SK-N-SH (cell line): ENCODE measurements at regions of chr18 and their contacts with region 1.

Region 1: DNA sequence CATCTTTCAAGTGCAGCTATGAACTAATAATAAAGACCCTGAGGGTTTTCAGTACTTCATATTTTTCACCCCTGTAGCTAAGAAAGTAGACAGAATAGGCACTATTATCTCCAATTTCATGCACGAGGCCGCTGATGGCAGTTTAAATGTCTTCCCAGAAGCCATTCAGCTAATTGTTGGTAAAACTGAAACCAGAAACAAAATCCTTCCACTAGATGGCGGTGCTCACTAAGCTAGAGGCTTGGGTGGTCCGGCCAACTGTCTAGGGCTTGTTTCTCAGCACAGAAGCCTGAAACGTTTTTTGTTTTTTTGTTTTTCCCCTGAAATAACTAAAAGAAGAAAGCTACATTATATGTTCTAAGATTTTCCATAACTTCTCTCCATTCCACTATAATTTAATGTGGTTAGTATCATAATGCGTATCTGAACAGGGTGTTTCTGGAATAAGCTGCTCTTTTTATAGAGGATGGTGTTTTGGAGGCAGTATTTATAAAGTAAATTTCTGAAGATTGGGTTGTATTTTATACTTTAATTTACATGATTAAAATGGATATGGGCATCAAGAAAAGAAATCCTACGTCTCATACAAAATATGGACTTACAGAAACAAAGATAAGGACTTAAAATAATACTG is 159.4 kb downstream of the PIK3C3 start:
- DNase-seq: peak; percentile 52
- H3K4me3 ChIP-seq: peak overlapping the region in 1 of 2 experiments; percentile 49; a peak in 1 of 4 replicates
- H3K27ac ChIP-seq: peak overlapping the region; percentile 32 to 34; a peak in 3 of 4 replicates
- H3K4me1 ChIP-seq: peaks cover 0 to 8% of the 10 kb centered on the region in 2 experiments; a peak in 2 of 4 replicates
- H3K27me3 ChIP-seq: no peaks in the 10 kb centered on the region
- CTCF ChIP-seq: peak; percentile 95
- EP300 ChIP-seq: no peak
- RAD21 ChIP-seq: peak; percentile 99

Region 2: DNA sequence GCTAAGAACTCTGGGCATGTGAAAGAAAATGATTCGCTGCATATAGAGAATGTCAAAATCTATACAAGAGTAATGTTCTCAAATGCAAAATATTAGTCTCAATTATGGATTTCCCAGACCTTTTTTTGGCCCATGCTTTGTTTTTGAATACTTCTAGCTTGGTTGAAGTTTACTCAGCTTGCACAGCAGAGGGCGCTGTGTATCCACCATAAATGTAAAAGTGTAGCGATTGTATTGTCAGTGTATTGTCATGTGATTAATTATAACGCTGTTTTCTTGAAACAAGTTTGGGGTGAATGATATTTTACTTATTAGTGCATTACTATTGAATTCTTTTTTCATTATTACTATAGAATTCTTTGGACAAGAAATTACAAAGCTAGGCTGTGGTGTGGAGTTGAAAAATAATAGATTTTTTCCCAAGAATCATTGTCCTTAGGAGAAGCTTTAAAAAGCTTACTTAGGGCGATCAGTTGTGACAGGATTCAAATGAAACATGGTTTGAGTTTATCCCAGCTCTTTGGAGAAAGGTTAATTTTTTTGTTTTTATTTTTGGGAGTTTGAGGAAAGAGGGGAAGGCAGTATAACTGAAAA is 61.1 kb before region 1 on chr18:
- CTCF ChIA-PET with region 1: interaction called, 12 read pairs
- POLR2A ChIA-PET with region 1: no interaction called
- DNase-seq: peak; percentile 36
- H3K4me3 ChIP-seq: no peak overlapping the region; a peak in 1 of 4 replicates
- H3K27ac ChIP-seq: peak overlapping the region in 1 of 2 experiments; percentile 53; a peak in 2 of 4 replicates
- H3K4me1 ChIP-seq: peaks cover 0 to 5% of the 10 kb centered on the region in 2 experiments; a peak in 2 of 4 replicates
- H3K27me3 ChIP-seq: no peaks in the 10 kb centered on the region
- CTCF ChIP-seq: peak; percentile 95
- EP300 ChIP-seq: no peak
- RAD21 ChIP-seq: peak; percentile 77

Region 3: DNA sequence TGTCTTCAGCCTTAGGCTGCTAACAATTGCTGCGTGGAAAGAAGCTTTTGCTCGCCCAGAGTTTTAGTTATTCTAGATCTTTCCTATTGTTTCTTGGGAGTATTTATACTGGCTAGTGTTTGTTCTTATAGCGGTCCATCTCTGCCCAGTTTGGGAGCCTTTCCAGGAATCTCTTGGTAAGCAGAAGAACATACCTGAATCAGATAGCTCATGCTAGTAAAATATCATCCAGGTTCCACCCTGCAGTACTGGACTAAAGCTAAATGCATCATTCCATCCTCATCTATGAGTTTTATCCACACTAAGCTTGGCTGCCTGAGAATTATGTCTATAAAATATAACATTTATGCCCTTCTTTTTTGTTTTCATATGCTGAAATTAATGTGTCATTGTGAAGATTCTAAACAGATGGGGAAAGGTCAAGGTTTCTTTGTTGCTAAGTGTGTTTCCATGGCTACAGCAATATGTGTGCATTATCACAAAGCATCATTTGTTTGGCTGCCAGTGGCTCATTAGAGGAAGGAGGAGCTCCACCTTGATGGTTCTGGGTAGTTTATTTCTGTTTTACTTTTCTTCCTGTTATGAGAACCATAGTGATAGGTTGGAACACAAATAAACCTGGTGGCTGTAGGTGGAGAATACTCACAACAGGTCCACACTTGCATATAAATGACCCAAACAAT is 23.4 kb after region 1 on chr18:
- CTCF ChIA-PET with region 1: interaction called, 12 read pairs
- POLR2A ChIA-PET with region 1: no interaction called
- DNase-seq: no peak
- H3K4me3 ChIP-seq: no peak overlapping the region
- H3K27ac ChIP-seq: no peak overlapping the region
- H3K4me1 ChIP-seq: no peaks in the 10 kb centered on the region
- H3K27me3 ChIP-seq: no peaks in the 10 kb centered on the region
- CTCF ChIP-seq: no peak
- EP300 ChIP-seq: no peak
- RAD21 ChIP-seq: no peak

Region 4: DNA sequence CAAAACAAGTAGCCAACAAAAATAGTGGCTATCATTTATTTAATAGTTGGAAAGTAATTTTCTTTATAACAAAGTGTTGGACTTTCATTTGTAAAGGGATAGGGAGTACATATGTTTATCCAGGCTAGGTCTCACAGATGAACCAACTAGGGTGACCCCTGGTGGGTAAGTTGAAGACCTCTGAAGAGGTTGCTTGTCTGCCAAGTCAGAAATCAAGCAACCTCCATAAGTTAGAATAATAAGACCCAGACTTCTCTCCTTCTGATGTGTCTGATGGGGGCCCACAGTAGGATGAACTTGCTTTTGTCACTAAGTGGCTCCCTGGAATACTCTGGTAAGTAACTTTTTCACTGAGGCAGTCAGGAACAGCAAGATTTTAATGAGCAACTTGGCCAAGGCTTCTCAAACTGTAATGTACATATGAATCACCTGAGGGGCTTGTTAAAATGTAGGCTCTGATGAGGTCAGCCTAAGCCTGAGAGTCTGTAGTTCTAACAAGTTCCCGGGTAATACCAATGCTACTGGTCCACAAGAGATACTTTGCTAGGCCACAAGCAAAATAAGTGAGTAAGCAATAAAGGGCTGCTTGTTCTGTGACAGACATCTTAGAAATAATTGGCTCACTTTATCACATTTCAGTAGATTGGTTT is 160.2 kb after region 1 on chr18:
- CTCF ChIA-PET with region 1: interaction called, 78 read pairs
- POLR2A ChIA-PET with region 1: no interaction called
- DNase-seq: peak; percentile 54
- H3K4me3 ChIP-seq: no peak overlapping the region
- H3K27ac ChIP-seq: no peak overlapping the region
- H3K4me1 ChIP-seq: peaks cover 0 to 3% of the 10 kb centered on the region in 2 experiments; a peak in 1 of 4 replicates
- H3K27me3 ChIP-seq: no peaks in the 10 kb centered on the region
- CTCF ChIP-seq: peak; percentile 57
- EP300 ChIP-seq: no peak
- RAD21 ChIP-seq: peak; percentile 66

Region 5: DNA sequence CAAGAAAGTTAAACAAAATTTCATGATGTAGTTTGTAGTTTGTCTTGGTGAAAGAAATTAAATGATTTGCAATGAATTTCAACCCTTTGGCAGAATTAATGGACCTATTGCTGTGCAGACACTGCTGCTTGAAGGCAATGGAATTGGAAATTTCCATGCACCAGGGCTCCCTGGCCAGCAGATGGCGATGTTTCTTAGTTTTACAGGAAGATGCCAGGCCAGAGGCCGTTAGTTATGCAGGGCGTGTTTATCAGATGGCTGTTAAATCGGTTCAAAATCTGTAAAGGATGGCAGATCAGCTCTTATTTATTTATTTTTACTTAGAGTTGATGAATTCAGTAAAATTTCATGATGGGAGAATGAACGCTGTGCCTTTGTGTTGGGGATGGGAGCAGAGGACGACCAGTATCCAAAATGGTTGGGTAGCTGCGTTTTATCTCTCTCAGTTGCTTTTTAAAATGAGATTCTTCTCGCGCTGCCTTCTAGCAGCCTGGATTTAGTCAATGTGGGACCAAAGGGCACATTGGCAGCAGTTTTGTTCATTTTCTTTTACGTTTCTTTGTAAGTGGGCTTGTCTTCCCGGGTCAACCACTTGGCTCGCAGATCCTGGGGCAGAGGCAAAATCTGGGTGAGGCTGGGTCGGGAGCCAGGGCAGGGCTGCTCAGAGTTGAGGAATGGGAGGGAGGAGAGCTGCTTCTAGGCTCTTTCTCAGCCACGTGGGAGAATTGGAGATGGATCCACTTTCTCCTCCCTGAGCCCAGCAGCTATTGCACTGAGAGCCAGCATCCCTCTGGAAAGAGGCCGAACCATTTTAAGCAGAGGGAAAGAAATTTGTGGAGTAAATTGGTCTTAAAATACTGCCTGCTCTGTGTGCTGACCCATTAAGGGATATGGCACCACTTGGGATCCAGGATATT is 184.6 kb after region 1 on chr18:
- CTCF ChIA-PET with region 1: interaction called, 59 read pairs
- POLR2A ChIA-PET with region 1: no interaction called
- DNase-seq: peak; percentile 62
- H3K4me3 ChIP-seq: no peak overlapping the region
- H3K27ac ChIP-seq: no peak overlapping the region
- H3K4me1 ChIP-seq: no peaks in the 10 kb centered on the region; a peak in 1 of 4 replicates
- H3K27me3 ChIP-seq: no peaks in the 10 kb centered on the region
- CTCF ChIP-seq: peak; percentile 96
- EP300 ChIP-seq: peak in 1 of 2 experiments; percentile 33; a peak in 1 of 4 replicates
- RAD21 ChIP-seq: peak; percentile 93

Region 6: GRCh38 chr18:43277164-43277600 is 1162.8 kb after region 1 on chr18 and contains the start of gene SYT4:
- CTCF ChIA-PET with region 1: interaction called, 32 read pairs
- POLR2A ChIA-PET with region 1: interaction called, 6 read pairs
- DNase-seq: peak; percentile 40
- H3K4me3 ChIP-seq: peak within 1 kb of the TSS; percentile 23 to 38; a peak in 3 of 4 replicates
- H3K27ac ChIP-seq: peak within 1 kb of the TSS in 1 of 2 experiments; percentile 60; a peak in 2 of 4 replicates
- H3K4me1 ChIP-seq: peaks cover 0 to 15% of the 10 kb centered on the region in 2 experiments; a peak in 2 of 4 replicates
- H3K27me3 ChIP-seq: no peaks in the 10 kb centered on the region
- CTCF ChIP-seq: no peak
- EP300 ChIP-seq: no peak
- RAD21 ChIP-seq: peak; percentile 44
- polyA plus RNA-seq, gene SYT4: 0.44 and 1.3 TPM in 2 replicates

Region 7: DNA sequence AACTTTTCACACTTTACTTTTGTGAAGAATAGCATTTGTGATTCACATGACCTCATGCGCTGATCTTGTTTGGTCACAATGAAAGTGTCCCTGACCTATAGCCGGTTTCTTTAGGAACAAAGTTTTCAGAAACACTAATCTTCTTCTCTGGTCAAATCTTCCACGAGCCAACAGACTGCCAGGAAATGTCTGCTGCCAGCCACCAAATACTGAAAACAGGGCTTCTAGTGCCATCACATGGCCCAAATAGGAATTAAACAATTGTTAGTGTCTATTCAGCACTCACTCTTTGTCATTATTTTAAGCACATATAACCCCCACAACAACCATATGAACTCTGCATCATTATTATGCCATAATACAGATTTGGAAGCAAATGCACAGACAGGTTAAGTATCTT is 1449.4 kb after region 1 on chr18:
- CTCF ChIA-PET with region 1: interaction called, 39 read pairs
- POLR2A ChIA-PET with region 1: no interaction called
- DNase-seq: peak; percentile 40
- H3K4me3 ChIP-seq: no peak overlapping the region
- H3K27ac ChIP-seq: no peak overlapping the region
- H3K4me1 ChIP-seq: no peaks in the 10 kb centered on the region; a peak in 1 of 4 replicates
- H3K27me3 ChIP-seq: no peaks in the 10 kb centered on the region
- CTCF ChIP-seq: peak; percentile 67
- EP300 ChIP-seq: no peak
- RAD21 ChIP-seq: peak; percentile 96